Heart left ventricle (tissue), 16 donors: ENCODE measurements at regions of chr7 and their contacts with region 1.

Region 1: DNA sequence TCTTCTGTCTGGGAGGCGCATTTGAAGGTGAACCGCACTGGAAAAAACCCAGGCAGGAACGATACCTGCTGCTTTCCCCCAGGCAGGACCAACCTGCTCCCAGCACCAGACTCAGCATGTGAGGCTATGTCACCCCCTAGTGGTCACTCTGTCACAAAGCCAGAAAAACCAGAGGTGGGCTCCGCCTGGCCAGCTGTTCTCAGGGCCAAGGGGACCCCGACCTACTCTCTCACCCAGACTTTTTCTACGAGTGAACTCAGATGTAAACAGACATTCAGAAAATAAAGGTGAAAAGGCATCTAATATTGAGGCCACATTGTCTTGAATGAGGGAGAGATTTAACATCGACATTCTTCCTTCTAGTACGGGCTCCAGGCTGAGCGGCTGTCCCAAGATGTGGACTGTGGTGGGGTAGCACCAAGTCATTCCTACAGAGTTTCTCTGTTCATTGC is 117.3 kb downstream of the PRKAG2 start:
- DNase-seq: peak in 2 of 5 donors; percentile 60 to 67
- ATAC-seq: peak in 3 of 4 donors; percentile 51 to 55 (median 53)
- H3K4me3 ChIP-seq: no peak overlapping the region
- H3K27ac ChIP-seq: no peak overlapping the region
- H3K4me1 ChIP-seq: peaks cover 0 to 32% (median 15%) of the 10 kb centered on the region in 12 donors
- H3K27me3 ChIP-seq: no peaks in the 10 kb centered on the region
- CTCF ChIP-seq: peak; percentile 80 to 92 (median 88)
- POLR2A ChIP-seq: no peak

Region 2: DNA sequence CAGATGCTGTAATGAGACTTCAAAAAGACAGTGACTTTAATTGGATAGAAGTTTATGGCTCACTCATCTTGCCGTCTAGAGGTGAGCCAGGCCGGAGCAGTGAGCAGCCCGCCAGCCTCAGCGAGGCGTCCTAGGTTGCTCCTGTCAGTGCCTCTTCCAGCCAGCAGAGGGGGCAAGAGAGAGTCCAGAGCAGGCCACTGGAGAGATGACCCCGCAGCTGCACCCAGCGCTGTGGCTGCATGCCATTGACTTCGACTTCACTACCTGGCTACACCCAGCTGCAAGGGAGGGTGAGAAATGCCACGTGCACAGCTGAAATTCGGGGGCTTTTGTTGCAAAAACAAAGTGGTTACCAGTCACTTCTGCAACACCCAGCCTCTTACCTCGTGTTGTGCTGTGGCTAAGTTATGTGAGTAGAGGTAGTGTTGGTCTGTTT is 391.5 kb before region 1 on chr7:
- intact Hi-C with region 1: loop called (anchors 1 to 10 kb)
- DNase-seq: peak; percentile 79 to 88 (median 85)
- ATAC-seq: peak; percentile 84 to 97 (median 96)
- H3K4me3 ChIP-seq: no peak overlapping the region
- H3K27ac ChIP-seq: peak overlapping the region in 1 of 12 donors; percentile 63
- H3K4me1 ChIP-seq: peaks cover 0 to 17% (median 6%) of the 10 kb centered on the region in 12 donors
- H3K27me3 ChIP-seq: no peaks in the 10 kb centered on the region
- CTCF ChIP-seq: peak; percentile 91 to 98 (median 95)
- POLR2A ChIP-seq: no peak

Region 3: DNA sequence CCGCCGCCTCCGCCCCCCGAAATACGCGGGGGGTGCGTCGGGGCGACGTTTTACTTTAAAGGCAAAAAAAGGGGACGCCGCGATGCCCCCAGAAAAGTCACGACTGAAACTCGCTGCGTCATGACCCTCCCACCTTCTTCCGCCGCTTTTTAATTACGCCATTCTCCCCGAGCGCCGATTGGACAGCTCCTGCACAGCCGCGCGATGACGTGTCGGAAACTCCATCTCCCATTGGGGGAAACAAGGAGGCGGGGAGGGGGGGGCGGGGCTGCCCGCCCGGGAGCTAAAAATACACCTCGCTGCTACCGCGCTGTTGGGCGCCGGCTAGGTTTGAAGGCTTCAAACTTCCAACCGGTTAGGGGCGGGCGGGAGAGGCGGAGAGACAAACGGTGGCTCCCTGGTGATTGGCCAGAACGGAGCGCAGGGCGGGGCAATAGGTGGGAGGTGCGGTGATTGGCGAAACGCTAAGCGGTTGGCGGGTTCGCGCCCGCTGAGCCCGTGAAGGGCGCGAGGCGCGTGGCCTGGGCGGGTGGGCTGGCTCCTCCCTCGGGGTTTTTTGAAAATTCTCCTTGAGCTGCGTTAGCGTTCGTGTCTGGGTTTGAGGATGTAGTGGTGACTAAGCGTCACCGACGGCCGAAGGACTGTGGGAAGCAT is 239.7 kb before region 1 on chr7 and contains the start of gene RHEB:
- intact Hi-C with region 1: loop called in 1 of 10 experiments (anchors 5 kb)
- DNase-seq: peak; percentile 98 to 99 (median 99)
- ATAC-seq: peak; percentile 93 to 98 (median 96)
- H3K4me3 ChIP-seq: peak within 1 kb of the TSS; percentile 55 to 98 (median 79)
- H3K27ac ChIP-seq: peak within 1 kb of the TSS; percentile 91 to 100 (median 98)
- H3K4me1 ChIP-seq: peaks cover 0 to 45% (median 28%) of the 10 kb centered on the region in 12 donors
- H3K27me3 ChIP-seq: no peaks in the 10 kb centered on the region
- CTCF ChIP-seq: no peak
- POLR2A ChIP-seq: no peak
- total RNA-seq, gene RHEB: 81.4 to 155 (median 106) TPM

Region 4: GRCh38 chr7:151626422-151627115 is 133.0 kb before region 1 on chr7:
- intact Hi-C with region 1: loop called in 8 of 10 experiments (anchors 2 to 10 kb)
- DNase-seq: peak in 4 of 5 donors; percentile 28 to 64 (median 46)
- ATAC-seq: peak; percentile 26 to 66 (median 58)
- H3K4me3 ChIP-seq: no peak overlapping the region
- H3K27ac ChIP-seq: peak overlapping the region in 4 of 12 donors; percentile 17 to 50 (median 26)
- H3K4me1 ChIP-seq: peaks cover 0 to 64% (median 30%) of the 10 kb centered on the region in 12 donors
- H3K27me3 ChIP-seq: no peaks in the 10 kb centered on the region
- CTCF ChIP-seq: peak in 11 of 12 donors; percentile 21 to 61 (median 45)
- POLR2A ChIP-seq: no peak

Region 5: DNA sequence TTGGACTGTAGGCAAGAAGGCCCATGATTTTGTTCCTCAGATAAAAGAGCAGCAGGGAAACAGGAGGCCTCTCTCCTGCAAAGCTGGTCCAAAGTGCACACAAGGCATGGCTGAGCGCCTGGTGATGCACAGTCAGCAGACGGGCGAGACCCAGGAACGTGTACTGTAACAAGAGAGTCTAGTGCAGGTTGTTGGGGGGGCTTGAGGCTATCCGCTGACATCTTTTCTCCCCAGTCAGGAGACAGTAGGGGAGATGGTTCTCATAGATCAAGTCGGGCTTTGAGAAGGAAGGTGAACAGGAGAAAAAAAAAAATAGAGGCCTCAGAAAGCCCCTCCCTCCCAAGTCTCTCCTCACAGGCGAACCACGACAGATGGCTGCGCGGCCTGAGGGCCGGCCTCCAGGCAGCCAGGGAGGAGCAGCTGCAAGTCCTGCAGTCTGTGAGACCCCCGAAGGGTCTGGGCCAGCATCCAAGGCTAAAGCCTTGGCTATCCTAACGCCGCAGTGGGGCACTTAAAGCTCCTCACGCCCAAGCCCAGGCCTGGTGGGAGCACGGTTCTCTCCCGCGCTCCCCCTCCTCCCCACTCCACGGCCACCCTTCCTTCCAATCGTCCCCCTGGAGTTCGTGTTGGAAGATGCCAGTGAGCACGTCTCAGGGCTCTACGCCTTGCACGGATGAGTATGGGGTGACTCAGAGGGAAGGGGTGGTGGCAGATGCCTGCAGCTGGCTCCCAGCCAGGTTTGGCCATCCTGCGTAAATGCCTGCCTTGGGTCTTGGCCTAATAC is 49.0 kb after region 1 on chr7:
- intact Hi-C with region 1: no loop called
- DNase-seq: no peak
- ATAC-seq: no peak
- H3K4me3 ChIP-seq: no peak overlapping the region
- H3K27ac ChIP-seq: no peak overlapping the region
- H3K4me1 ChIP-seq: peaks cover 0 to 29% (median 0%) of the 10 kb centered on the region in 12 donors
- H3K27me3 ChIP-seq: no peaks in the 10 kb centered on the region
- CTCF ChIP-seq: no peak
- POLR2A ChIP-seq: no peak

Region 6: GRCh38 chr7:152328234-152328633 is 568.6 kb after region 1 on chr7:
- intact Hi-C with region 1: no loop called
- DNase-seq: no peak
- ATAC-seq: peak in 3 of 4 donors; percentile 71 to 92 (median 84)
- H3K4me3 ChIP-seq: no peak overlapping the region
- H3K27ac ChIP-seq: no peak overlapping the region
- H3K4me1 ChIP-seq: peaks cover 0 to 10% (median 0%) of the 10 kb centered on the region in 12 donors
- H3K27me3 ChIP-seq: no peaks in the 10 kb centered on the region
- CTCF ChIP-seq: no peak
- POLR2A ChIP-seq: no peak